ENCODE measurements at regions of chr4 and their contacts with region 1.

Region 1: DNA sequence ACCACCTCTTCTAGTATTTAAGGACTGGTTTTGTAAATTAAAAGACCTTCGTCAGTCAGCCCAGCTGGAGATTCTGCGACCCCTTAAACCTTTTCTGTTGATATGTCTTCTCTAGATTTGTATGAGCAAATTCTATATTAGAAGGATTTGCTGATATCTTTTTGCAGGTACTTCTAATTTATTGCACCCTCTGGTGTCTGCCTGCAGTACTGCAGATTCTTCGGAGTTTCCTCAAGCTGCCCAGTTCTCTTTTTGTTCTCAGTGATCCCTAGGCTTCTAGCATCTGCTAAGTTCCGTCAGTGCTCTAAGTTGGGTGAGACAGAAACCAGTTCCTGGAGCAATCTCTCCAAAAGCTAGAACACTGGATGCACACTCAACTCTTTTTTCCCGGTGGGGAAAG is 545.2 kb downstream of the C4orf33 start:
- DNase-seq: peak; percentile 43
- ATAC-seq: no peak
- H3K4me3 Mint-ChIP-seq: no peak overlapping the region
- H3K27ac Mint-ChIP-seq: no peak overlapping the region
- H3K4me1 Mint-ChIP-seq: no peaks in the 10 kb centered on the region
- H3K27me3 Mint-ChIP-seq: no peaks in the 10 kb centered on the region

Region 2: GRCh38 chr4:129362674-129363274 is 278.4 kb before region 1 on chr4:
- CTCF ChIA-PET with region 1: interaction called, 27 read pairs
- DNase-seq: peak; percentile 54
- ATAC-seq: no peak
- H3K4me3 Mint-ChIP-seq: no peak overlapping the region
- H3K27ac Mint-ChIP-seq: no peak overlapping the region
- H3K4me1 Mint-ChIP-seq: no peaks in the 10 kb centered on the region
- H3K27me3 Mint-ChIP-seq: peaks cover 12% of the 10 kb centered on the region

Region 3: DNA sequence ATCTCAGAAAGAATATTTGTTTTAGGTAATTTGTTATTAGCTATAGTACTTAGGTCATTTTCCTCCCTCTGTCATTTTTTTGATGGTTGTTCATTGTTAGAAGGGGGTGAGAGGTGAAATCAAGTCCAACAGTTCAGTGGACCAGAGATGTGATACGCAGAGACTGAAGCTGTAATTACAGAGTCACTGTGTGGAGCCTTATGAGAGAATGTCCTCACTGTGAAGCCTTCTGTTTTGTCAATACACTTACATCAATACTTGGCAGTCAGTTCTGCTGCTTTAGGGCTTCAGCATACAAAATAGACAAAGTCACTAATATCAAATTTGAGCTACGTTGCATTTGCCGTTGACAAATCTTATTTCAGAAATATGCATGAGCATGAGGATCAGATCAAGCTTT is 147.3 kb after region 1 on chr4:
- CTCF ChIA-PET with region 1: no interaction called
- DNase-seq: no peak
- ATAC-seq: no peak
- H3K4me3 Mint-ChIP-seq: no peak overlapping the region
- H3K27ac Mint-ChIP-seq: no peak overlapping the region
- H3K4me1 Mint-ChIP-seq: no peaks in the 10 kb centered on the region
- H3K27me3 Mint-ChIP-seq: no peaks in the 10 kb centered on the region

Measured in activated CD8-positive, alpha-beta memory T cell treated with anti-CD3 and anti-CD28 coated beads, Interleukin-2, amount 10 ng/mL, durations not matched to agents 7 days and 5 days (primary cell).